Sigmoid colon (tissue), 7 donors: ENCODE measurements at regions of chr2 and their contacts with region 1.

Region 1: DNA sequence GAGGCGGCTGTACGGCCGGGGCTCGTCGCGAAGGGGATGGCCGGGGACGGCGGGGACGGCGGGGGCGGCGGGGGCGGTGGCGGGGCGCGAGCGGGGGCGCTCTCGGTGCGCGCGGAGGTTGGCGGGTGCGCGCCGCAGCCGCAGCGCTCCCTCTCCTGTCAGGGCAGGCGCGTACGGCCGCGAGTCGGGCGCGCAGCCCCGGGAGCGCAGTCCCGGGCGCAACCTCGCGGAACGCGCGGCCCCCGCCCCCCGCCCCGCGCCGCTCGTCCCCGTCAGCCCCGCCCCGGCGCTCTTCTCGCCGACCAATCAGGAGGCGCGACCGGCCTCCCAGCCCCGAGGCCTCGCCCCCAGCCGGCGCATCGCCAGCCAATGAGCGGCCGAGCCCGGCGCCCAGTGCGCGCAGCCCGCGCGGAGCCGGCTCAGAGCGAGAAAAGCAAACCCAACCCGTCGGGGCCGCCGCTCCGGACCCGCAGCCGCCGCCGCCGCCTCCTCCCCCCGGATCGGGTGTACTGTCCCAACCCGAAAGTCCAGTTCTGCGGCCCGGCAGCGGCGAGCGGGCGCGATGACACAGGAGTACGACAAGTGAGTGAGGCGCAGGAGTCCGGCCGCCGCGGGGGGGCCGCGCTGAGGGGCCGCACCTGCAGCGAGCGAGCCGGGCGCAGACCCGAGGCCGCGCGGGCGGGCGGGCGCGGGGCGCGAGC is at the start of gene GRHL1:
- DNase-seq: peak; percentile 95
- H3K4me3 ChIP-seq: peak within 1 kb of the TSS; percentile 66 to 87 (median 78)
- H3K27ac ChIP-seq: peak within 1 kb of the TSS; percentile 73 to 84 (median 81)
- H3K4me1 ChIP-seq: peaks cover 0 to 18% (median 10%) of the 10 kb centered on the region in 4 donors
- H3K27me3 ChIP-seq: peaks cover 0 to 3% (median 0%) of the 10 kb centered on the region in 3 donors
- CTCF ChIP-seq: no peak
- EP300 ChIP-seq: no peak
- POLR2A ChIP-seq: no peak
- total RNA-seq, gene GRHL1: 1.4 to 4.2 (median 2.5) TPM

Region 2: DNA sequence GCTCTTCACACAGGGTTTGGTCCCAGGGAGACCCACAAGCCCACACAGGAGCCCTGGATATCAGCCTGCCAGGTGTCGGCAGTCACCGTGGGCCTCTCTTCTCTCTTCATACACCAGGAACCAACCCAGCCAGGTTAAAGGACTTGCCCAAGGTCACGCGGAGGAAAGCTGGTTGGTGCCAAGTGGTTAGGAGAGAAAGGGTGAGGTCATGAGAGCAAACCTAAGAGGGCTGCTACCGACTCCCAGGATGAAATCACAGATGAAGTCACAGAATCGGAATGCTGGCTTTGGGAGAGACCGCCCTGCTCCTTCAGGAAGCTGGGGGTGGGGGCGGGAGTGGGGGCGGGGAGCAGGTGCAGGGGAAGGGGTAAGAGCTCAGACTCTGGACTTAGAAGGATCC is 131.4 kb before region 1 on chr2:
- intact Hi-C with region 1: no loop called
- DNase-seq: no peak
- H3K4me3 ChIP-seq: no peak overlapping the region
- H3K27ac ChIP-seq: no peak overlapping the region
- H3K4me1 ChIP-seq: no peaks in the 10 kb centered on the region
- H3K27me3 ChIP-seq: no peaks in the 10 kb centered on the region
- CTCF ChIP-seq: no peak
- EP300 ChIP-seq: no peak
- POLR2A ChIP-seq: no peak

Region 3: DNA sequence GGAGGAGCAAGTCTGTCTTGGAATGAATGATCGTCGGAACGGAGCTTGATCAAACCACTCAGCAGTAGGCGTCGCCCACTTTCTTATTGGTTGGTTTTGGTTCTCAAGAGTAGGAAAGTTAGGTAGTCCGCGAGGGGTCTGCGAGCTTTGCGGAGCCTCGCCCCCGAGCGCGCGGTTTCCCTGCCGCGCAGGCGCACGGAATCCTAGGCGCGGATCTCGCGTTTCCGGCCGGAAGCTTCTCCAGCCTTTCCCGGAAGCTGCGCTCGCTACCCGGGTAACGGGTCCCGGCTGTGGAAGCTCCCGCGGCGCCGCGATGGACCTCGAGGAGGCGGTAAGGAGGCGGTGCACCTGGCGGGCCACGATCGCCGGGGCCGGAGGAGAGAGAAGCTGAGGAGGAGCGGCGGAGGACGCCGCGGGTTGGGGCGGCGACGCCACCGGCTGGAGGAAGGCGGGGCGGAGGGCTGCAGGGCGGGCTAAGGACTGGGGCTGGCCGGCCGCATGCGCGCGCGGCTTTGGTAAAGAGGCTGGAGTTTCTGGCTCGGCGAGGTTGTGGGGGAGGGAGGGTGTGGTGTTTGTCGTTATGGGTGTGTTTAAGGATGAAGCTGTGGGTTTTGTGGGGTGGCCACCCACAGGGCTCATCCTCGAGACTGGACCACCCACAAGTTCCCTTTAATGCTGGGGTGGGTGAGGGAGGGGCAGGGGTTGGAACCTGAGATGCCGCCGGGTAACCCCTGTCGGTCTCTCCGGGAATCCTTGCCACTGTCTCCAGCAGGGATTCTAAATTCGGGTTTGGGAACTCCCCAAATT is 108.0 kb before region 1 on chr2 and contains the start of gene TAF1B:
- intact Hi-C with region 1: loop called (anchors 2 kb)
- DNase-seq: peak; percentile 88
- H3K4me3 ChIP-seq: peak within 1 kb of the TSS; percentile 68 to 77 (median 73)
- H3K27ac ChIP-seq: peak within 1 kb of the TSS; percentile 80 to 90 (median 88)
- H3K4me1 ChIP-seq: peaks cover 0 to 19% (median 12%) of the 10 kb centered on the region in 4 donors
- H3K27me3 ChIP-seq: no peaks in the 10 kb centered on the region
- CTCF ChIP-seq: peak in 2 of 4 experiments; percentile 17 to 26
- EP300 ChIP-seq: peak in 1 of 4 donors; percentile 34
- POLR2A ChIP-seq: peak; percentile 39 to 51
- total RNA-seq, gene TAF1B: 10.3 to 14.5 (median 12.2) TPM